ENCODE measurements at regions of chr15 and their contacts with region 1.

Region 1: GRCh38 chr15:101258238-101259144 is 6.6 kb upstream of the CHSY1 start:
- DNase-seq: no peak
- H3K4me3 ChIP-seq: no peak overlapping the region
- H3K27ac ChIP-seq: no peak overlapping the region
- H3K4me1 ChIP-seq: no peaks in the 10 kb centered on the region
- H3K27me3 ChIP-seq: no peaks in the 10 kb centered on the region
- CTCF ChIP-seq: peak; percentile 87 to 89

Region 2: DNA sequence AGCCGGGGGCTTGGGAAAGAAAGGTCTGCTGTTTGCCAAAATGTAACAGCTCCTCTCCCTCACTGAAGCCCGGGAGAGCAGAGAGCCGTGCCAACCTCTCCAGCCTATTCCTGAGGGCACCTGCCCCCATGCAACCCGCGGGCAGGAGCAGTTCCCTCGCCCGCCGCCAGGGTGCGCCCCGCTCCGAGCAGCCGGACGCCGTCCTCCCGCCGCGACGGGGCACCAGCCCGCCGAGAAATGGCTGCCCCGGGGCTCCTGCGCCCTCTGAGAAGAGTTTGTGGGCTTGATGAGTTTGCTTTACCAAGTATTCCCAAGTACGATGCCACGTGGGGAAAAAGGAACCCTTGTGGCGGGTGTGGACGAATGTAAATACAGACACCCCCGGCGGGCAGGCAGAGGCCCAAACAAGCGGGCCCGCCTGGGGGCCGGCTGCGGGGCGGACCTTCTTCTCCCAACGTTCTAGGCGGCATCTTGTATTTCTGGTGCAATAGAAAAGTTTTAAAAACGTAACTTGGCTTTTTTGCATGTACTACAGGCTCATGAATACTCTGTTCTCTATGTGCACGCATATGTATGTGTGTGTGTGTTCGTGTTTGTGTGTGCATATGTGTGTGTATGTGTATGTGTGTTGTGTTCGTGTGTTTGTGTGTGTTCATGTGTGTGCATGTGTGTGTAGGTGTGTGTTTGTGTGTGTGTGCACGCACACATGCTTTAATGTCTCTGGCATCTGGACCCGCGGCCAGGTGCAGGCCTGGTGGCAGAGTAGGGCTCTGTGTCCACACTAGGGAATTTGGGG is 169.5 kb before region 1 on chr15:
- intact Hi-C with region 1: loop called (anchors 2 kb)
- DNase-seq: peak; percentile 65 to 84
- H3K4me3 ChIP-seq: peak overlapping the region in 1 of 2 donors; percentile 33
- H3K27ac ChIP-seq: no peak overlapping the region
- H3K4me1 ChIP-seq: peaks cover 0 to 30% (median 11%) of the 10 kb centered on the region in 4 donors
- H3K27me3 ChIP-seq: no peaks in the 10 kb centered on the region
- CTCF ChIP-seq: peak; percentile 99 to 100

Measured in tibial artery (tissue), 4 donors.